Activated T-helper 2 cell treated with anti-CD3 and anti-CD28 coated beads, Interferon-gamma antibody, Interleukin-2, Interleukin-4, amounts not matched to agents 10 μg/mL and 5 μg/mL and 100 μg/mL, durations not matched to agents 14 hours and 24 hours and 36 hours (primary cell): ENCODE measurements at regions of chr21 and their contacts with region 1.

Region 1: DNA sequence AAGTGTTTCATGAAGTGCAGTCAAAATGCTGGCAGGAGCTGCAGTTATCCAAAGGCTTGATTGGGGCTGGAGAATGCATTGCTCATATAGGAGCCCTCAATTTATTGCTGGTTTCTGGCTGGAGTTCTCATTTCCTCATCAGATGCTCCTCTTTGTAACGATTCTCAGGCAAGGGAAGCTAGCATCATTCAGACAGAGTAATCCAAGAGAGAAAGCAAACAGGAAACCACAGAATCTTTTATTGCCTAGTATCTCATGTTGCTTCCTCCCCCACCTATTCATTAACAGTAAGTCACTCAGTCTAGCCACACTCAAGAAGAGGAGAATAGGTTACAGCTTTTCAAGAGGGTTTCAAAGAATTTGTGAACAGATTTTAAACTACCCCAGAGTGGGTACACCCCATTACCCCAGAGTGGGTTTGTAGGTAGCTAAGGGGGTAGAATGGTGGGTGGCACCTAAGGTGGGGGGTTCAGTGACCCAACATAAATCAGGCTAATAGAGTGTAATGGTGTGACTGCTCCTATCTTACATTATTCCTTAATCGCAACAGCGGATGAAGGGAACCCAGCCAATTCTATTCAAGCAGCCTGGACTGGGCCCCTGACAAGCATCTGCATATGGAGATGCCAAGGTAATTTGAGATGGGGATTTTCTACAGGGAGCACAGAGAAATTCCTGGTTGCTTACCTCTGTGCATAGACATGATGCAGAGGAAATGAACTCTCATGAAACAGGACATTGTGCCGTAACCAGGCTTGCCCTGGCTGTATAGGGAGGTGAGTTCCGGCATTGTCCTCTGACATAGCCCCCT is 67.1 kb downstream of the KCNJ15 start:
- DNase-seq: no peak
- H3K4me3 Mint-ChIP-seq: no peak overlapping the region
- H3K27ac Mint-ChIP-seq: no peak overlapping the region
- H3K4me1 Mint-ChIP-seq: peaks cover 13% of the 10 kb centered on the region
- H3K27me3 Mint-ChIP-seq: no peaks in the 10 kb centered on the region

Region 2: DNA sequence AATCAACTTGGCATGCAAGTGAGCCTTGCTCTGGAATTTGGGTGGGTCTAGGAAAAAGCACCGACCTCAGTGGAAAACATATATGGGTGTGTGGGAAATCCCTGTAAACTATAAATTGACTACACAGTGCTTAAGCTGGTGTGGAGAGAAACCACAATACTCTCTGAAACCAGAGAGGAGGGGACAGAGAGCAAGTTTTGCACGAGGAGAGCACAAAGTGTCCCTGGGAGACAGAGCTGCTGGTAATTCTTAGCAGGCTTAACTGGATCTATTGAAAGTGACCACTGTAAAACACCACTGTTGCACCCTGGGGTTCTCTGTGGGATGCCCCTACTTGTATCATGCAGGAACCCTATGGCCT is 54.4 kb before region 1 on chr21:
- intact Hi-C with region 1: loop called (anchors 1 kb)
- DNase-seq: no peak
- H3K4me3 Mint-ChIP-seq: no peak overlapping the region
- H3K27ac Mint-ChIP-seq: no peak overlapping the region
- H3K4me1 Mint-ChIP-seq: peaks cover 32% of the 10 kb centered on the region
- H3K27me3 Mint-ChIP-seq: peaks cover 12% of the 10 kb centered on the region

Region 3: DNA sequence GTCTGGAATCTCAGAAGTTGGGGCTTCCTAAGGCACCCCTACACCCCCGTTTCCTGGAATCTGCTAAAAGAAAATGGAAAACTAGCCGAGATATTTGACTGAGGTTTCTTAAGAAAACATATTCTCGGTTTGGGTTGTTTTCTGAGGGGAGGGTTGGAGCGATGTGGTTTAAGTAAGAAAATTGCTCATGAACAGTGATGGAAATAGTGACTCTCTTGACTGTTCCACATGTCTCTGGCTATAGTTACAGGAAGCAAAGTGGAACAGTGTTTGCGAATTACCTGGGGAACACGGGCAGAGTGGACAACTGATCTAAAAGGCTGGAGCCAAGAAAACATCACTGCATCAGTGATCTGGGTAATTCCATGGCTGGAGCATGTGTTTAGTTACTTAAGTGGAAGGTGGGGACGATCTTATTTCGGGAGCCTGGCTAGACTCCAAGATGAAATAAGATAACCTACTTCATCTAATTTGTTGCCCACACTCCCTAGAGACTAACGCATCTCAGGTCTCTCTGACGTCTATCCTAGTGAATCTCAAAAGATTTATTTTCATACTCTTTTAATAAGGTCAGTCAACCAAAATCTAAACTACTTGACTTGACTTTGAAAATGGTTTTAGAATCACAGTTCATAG is 25.3 kb after region 1 on chr21:
- intact Hi-C with region 1: loop called (anchors 1 kb)
- DNase-seq: no peak
- H3K4me3 Mint-ChIP-seq: no peak overlapping the region
- H3K27ac Mint-ChIP-seq: peak overlapping the region; percentile 82
- H3K4me1 Mint-ChIP-seq: peaks cover 29% of the 10 kb centered on the region
- H3K27me3 Mint-ChIP-seq: peaks cover 4% of the 10 kb centered on the region

Region 4: GRCh38 chr21:38590449-38591217 is 266.7 kb after region 1 on chr21:
- intact Hi-C with region 1: no loop called
- DNase-seq: no peak
- H3K4me3 Mint-ChIP-seq: no peak overlapping the region
- H3K27ac Mint-ChIP-seq: no peak overlapping the region
- H3K4me1 Mint-ChIP-seq: peaks cover 4% of the 10 kb centered on the region
- H3K27me3 Mint-ChIP-seq: peaks cover 22% of the 10 kb centered on the region